ENCODE measurements at regions of chr7 and their contacts with region 1.

Region 1: DNA sequence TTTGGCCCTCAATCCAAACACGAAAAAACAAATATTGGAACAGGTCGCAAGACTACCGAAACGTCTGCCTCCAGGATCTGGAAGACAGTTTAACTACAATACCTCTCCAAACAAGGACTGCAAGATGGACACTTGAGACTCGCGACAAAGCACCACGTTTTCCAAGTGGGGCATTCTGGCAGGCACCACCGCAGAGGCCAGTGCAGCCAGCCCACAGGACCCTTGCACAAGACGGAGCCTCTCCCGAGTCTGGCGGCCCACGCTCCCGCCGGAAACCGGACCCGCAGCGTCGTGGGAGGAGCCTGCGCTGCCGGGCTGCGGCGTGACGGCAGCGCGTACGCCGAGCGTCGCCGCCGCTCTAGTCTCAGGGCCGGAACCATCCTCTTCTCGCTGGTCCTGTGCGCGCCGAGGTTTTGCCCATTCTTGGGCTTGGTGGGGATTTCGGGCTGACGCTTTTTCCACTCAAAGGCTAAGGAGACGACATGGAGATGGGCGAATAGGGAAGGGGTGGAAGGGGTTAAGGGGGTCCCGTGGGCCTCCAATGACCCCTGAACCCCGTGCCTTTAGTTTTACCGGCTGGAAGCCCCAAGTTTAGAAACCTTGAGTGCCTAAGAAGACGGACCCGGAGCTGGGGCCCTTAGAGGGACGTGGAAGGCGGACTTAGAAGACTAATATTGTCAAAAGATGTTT is at the start of gene ORC5:
- DNase-seq: peak in 1 of 2 donors; percentile 83
- H3K4me3 ChIP-seq: peak within 1 kb of the TSS; percentile 72 to 79
- H3K27ac ChIP-seq: peak within 1 kb of the TSS; percentile 78 to 85
- H3K4me1 ChIP-seq: peaks cover 0 to 13% of the 10 kb centered on the region in 2 donors
- H3K27me3 ChIP-seq: no peaks in the 10 kb centered on the region
- CTCF ChIP-seq: no peak
- total RNA-seq, gene ORC5: 46.2 TPM

Region 2: GRCh38 chr7:104453190-104453589 is 245.3 kb after region 1 on chr7:
- intact Hi-C with region 1: no loop called
- DNase-seq: no peak
- H3K4me3 ChIP-seq: no peak overlapping the region
- H3K27ac ChIP-seq: no peak overlapping the region
- H3K4me1 ChIP-seq: no peaks in the 10 kb centered on the region
- H3K27me3 ChIP-seq: no peaks in the 10 kb centered on the region
- CTCF ChIP-seq: no peak

Region 3: DNA sequence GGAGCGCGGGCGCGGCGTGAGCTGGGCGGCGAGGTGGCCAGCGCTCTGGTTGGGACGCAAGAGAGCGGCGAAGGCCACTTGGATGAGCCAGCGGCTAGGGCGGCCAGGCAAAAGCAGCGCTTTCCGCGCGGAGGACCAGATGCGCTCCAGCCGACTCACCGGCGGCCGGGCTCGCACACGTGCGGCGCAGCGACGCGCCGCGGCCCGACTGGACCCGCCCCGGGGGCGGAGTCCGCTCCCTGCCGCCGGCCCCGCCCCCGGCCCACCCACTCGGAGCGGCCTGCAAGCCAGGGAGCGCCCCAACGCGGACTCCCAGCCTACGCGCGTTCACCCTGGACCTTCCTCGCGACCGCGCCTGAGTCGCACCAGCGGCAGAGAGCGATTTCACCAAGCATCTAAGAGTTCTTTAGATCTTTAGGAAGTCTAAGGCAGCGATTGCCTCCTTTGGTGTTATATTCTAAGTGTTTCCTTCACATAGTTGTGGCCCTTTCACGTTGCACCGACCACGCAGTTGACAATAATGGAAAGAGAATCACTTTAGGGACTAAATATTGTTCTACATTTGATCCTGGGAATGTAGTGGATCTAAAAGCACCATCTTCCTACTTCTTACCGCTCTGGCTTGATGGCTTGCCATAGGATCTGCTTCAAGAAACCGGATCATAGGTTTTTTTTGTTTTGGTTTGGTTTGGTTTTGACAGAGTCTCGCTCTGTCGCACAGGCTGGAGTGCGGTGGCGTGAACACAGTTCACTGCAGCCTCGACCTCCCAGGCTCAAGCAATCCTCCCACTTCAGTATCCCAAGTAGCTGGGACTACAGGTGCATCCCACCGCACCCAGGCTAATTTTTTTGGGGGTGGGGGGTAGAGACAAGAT is 1314.4 kb after region 1 on chr7 and contains the start of gene PUS7:
- intact Hi-C with region 1: loop called (anchors 10 kb)
- DNase-seq: peak; percentile 30 to 94
- H3K4me3 ChIP-seq: peak within 1 kb of the TSS; percentile 58 to 97
- H3K27ac ChIP-seq: peak within 1 kb of the TSS; percentile 80 to 90
- H3K4me1 ChIP-seq: peaks cover 5 to 8% of the 10 kb centered on the region in 2 donors
- H3K27me3 ChIP-seq: no peaks in the 10 kb centered on the region
- CTCF ChIP-seq: no peak
- total RNA-seq, gene PUS7: 17.2 TPM

Measured in ascending aorta (tissue), 2 donors.